Breast epithelium (tissue), 4 donors: ENCODE measurements at regions of chr1 and their contacts with region 1.

Region 1: DNA sequence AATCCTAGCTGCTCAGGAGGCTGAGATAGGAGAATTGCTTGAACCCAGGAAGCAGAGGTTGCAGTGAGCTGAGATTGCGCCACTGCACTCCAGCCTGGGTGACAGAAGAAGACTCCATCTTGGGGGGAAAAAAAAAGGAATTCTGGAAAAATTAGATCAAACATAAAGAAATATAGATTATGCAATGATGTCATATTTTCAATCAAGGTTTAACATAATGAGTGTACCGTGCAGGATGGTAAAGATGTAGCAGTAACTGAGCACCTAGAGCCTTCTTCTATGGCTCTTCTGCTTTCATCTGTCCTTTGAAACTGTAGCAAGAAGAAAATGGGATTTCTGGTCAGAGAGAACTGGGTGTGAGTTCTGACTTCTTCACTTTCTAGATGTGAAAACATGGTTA is 258.7 kb upstream of the LYPLAL1 start:
- DNase-seq: no peak
- H3K4me3 ChIP-seq: no peak overlapping the region
- H3K27ac ChIP-seq: no peak overlapping the region
- H3K4me1 ChIP-seq: no peaks in the 10 kb centered on the region
- H3K27me3 ChIP-seq: no peaks in the 10 kb centered on the region
- CTCF ChIP-seq: no peak
- POLR2A ChIP-seq: no peak

Region 2: DNA sequence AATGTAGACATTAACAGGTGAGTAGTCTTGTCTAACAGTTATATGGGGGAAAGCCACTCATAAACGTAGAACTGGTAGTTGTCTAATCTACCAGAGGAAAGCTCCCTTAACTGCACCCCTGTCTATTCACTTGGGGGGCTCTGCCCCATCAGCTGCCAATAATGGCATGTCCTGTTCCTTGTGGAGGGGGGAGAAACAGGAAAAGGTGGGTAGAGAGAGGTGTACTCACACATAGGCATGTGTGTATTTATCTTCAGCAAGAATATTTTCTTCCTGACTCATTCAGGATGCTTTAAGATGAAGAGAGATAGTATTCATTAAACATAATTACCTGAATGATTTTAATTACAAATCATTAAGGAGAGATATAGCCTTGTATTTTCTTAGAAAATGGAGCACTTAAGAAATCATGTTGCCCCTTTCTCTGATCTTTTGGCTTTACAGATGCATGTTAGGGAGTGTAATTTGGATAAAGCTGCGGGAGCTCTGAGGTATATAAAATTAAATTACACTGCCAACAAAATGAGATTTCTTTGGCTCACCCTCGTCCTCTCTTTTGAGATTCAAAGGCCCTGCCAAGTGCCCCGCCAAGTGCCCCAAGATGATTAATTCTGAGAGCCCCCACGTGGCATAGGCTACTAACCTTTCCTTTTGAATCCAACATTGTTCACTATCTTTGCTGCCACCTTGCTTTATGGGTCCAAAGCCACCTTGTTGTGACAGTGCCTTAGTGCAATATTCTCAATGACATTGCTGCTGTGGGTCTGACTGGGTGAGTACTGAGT is 27.7 kb before region 1 on chr1:
- intact Hi-C with region 1: loop called (anchors 1 kb)
- DNase-seq: no peak
- H3K4me3 ChIP-seq: no peak overlapping the region
- H3K27ac ChIP-seq: no peak overlapping the region
- H3K4me1 ChIP-seq: no peaks in the 10 kb centered on the region
- H3K27me3 ChIP-seq: no peaks in the 10 kb centered on the region
- CTCF ChIP-seq: no peak
- POLR2A ChIP-seq: no peak

Region 3: DNA sequence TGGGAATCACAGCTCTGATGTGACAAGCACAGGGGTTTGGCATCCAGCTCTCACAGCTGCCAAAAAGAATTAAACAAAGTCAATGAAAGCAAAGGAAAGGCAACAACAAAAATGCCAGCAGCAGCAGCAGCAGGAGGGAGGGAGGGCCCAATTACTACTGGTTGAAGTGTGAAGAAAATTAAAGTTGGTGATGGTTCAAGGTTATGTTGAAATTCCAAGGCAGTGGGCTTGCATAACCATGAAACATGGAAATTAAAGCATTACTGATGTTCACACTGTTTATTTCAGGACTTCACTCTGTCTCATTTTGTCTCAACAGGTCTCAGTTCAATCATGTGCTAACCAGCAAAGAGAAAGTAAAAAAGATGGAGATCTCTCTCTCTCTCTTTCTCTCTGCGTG is 38.4 kb after region 1 on chr1:
- intact Hi-C with region 1: no loop called
- DNase-seq: no peak
- H3K4me3 ChIP-seq: no peak overlapping the region
- H3K27ac ChIP-seq: no peak overlapping the region
- H3K4me1 ChIP-seq: no peaks in the 10 kb centered on the region
- H3K27me3 ChIP-seq: no peaks in the 10 kb centered on the region
- CTCF ChIP-seq: no peak
- POLR2A ChIP-seq: no peak